Dorsolateral prefrontal cortex (tissue), 120 donors: ENCODE measurements at regions of chr17 and their contacts with region 1.

Region 1: GRCh38 chr17:82450170-82451106 is at the start of gene CYBC1:
- DNase-seq: peak; percentile 79 to 92 (median 88)
- H3K4me3 ChIP-seq: peak within 1 kb of the TSS; percentile 67 to 99 (median 93)
- H3K27ac ChIP-seq: peak within 1 kb of the TSS; percentile 34 to 98 (median 94)
- H3K27me3 ChIP-seq: no peaks in the 10 kb centered on the region
- CTCF ChIP-seq: peak in 28 of 56 donors; percentile 10 to 48 (median 22)
- total RNA-seq, gene CYBC1: 40.3 to 149 (median 70.2) TPM

Region 2: GRCh38 chr17:82418001-82418986 is 32.1 kb before region 1 on chr17 and contains the starts of genes HEXD and OGFOD3:
- intact Hi-C with region 1: loop called in 1 of 2 experiments (anchors 2 kb)
- DNase-seq: peak; percentile 52 to 92 (median 76)
- H3K4me3 ChIP-seq: peak within 1 kb of the TSS; percentile 58 to 97 (median 87)
- H3K27ac ChIP-seq: peak within 1 kb of the TSS in 58 of 59 donors; percentile 59 to 97 (median 89)
- H3K27me3 ChIP-seq: no peaks in the 10 kb centered on the region
- CTCF ChIP-seq: peak in 12 of 56 donors; percentile 10 to 37 (median 24)
- total RNA-seq, gene HEXD: 15.3 to 59.1 (median 29.4) TPM
- total RNA-seq, gene OGFOD3: 20.4 to 48.6 (median 30.7) TPM